ENCODE measurements at regions of chr1 and their contacts with region 1.

Region 1: DNA sequence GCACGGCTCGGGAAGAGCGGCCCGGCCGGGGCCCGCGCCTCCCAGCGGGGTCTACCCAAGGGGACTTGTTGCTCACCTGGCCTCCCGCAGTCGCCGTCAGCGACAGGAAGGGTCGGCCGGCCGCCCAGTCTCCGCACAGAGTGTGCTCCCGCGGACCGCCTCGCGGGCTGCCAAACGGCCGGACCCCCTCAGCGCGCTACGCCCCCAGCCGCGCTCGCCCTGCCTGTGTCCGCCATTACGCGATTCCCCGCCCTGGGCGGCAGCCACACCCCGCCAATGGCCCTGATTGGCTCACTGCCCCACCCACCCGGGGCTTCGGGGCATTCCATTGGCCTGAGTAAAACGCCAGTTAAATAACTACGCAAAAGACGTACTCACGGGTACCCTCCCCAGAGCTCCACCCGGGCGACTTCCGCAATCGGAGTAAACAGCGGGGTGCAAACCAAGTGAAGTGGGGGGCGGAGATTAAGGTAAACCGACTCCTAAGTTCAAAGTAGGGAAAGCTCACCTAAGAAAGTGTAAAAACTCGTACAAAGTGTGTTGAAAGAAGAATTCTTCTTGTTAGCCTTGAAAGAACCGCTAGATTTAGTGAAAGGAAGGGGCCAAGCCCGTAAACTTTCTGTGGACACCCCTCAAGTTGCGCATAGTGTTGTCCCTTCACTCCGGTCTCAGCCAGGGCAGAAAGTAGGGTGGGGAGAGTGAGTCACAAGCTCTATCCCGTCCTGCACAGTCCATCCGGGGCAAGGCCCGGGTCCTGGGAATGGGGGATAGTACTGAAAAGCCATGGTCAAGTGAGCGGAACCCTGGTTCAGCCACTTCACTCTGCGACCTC is at the start of gene WASF2:
- DNase-seq: peak; percentile 97 to 100
- H3K4me3 ChIP-seq: peak within 1 kb of the TSS; percentile 99
- CTCF ChIP-seq: no peak
- POLR2A ChIP-seq: peak in 1 of 2 donors; percentile 85
- total RNA-seq, gene WASF2: 53.8 to 76.6 (median 70.3) TPM

Region 2: DNA sequence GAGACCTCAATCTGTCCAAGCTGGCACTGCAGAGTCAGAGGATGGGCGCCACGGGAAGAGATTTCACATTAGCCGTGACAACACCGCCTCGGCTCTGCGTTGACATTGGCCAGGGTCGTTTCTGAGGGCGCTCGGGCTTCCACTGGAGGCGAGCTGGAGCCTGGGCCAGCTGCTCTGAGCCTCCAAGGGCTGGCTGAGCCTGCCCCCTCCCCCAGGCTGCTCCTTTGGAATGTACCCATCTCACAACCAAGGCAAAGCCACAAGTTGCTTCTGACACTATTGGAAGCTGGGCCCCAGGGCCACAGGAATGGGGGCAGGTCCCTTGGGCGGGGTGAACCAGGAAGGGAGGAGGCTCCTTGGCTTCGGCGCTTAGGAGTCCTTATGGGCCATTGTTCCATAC is 85.1 kb before region 1 on chr1:
- intact Hi-C with region 1: no loop called
- DNase-seq: no peak
- H3K4me3 ChIP-seq: no peak overlapping the region
- CTCF ChIP-seq: no peak
- POLR2A ChIP-seq: no peak

Region 3: GRCh38 chr1:27436204-27437159 is 53.6 kb before region 1 on chr1:
- intact Hi-C with region 1: loop called (anchors 10 kb)
- DNase-seq: no peak
- H3K4me3 ChIP-seq: no peak overlapping the region
- CTCF ChIP-seq: no peak
- POLR2A ChIP-seq: no peak

Region 4: DNA sequence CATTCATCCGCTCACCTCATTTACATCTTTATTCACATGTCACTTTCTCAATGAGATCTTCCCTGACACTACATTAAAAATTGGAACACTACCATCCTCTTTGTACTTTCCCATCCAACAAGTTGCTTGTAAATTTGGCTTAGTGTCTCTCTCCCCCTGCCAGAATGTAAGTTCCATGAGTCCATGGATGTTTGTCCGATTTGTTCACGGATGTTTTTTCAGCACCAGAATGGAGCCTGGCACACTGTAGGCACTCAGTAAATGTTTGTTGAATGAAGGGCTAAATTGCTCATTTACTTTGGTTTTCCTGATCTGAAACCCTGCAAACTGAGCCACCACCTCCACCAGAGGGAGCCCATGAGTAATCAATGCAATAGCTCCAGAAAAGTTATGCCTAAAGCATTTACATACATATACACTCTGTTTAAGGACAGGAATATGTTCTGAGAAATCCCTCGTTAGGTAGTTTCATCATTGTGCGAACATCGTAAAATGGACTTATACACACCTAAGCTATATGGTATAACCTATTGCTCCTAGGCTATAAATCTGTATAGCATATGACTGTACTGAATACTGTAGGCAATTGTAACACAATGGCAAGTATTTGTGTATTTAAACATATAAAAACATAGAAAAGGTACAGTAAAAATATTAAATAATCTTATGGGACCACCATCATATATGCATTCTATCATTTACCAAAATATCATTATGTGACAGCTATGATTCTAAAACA is 601.1 kb after region 1 on chr1:
- intact Hi-C with region 1: no loop called
- DNase-seq: peak; percentile 57 to 91
- H3K4me3 ChIP-seq: no peak overlapping the region
- CTCF ChIP-seq: peak in 1 of 3 donors; percentile 41
- POLR2A ChIP-seq: no peak